GM12878 (cell line): ENCODE measurements at regions of chr7 and their contacts with region 1.

Region 1: DNA sequence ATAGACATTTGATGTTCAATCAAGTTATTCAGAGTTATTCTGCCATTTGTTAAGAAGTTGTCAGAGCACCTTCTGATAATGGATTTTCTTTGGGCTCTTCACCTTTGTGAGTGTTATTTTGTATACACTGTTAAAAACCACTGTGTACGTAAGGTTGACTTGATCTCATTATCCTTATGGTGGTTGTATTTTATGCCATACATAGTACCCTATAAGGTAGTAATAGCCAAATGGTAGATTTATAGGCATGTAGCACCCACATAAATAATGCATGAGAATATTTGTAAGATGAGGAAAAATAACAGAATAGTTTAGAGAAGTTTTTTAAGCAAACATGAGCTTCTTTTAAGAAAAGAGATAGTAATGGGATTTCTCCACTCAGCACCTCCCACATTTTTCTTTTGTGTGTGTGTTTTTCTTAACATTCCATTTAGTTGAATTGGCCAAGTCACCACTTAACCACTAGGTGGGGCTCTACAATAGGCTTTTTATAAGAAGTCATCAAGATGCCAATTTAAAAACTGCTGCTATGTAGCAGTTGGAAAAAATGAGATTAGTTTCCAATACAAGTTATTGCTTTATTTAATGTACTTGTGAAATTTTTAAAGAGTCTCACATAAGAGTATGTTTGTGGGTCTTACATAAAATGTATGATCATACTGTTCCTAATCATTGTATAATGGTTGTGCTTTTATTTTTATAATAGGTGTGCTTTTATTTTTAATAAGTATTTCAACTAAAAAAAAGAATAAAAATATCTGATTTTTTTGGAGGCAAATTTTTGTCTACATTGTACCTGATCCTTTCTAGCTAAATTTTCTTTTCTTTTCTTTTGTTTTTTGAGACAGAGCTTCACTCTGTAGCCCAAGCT is 41.1 kb upstream of the STMP1 start:
- DNase-seq: no peak
- ATAC-seq: peak; percentile 63
- H3K4me3 ChIP-seq: no peak overlapping the region
- H3K27ac ChIP-seq: no peak overlapping the region
- H3K4me1 ChIP-seq: no peaks in the 10 kb centered on the region
- H3K27me3 ChIP-seq: no peaks in the 10 kb centered on the region
- CTCF ChIP-seq: peak; percentile 58 to 78 (median 67)
- EP300 ChIP-seq: no peak
- POLR2A ChIP-seq: no peak
- RAD21 ChIP-seq: peak; percentile 43

Region 2: DNA sequence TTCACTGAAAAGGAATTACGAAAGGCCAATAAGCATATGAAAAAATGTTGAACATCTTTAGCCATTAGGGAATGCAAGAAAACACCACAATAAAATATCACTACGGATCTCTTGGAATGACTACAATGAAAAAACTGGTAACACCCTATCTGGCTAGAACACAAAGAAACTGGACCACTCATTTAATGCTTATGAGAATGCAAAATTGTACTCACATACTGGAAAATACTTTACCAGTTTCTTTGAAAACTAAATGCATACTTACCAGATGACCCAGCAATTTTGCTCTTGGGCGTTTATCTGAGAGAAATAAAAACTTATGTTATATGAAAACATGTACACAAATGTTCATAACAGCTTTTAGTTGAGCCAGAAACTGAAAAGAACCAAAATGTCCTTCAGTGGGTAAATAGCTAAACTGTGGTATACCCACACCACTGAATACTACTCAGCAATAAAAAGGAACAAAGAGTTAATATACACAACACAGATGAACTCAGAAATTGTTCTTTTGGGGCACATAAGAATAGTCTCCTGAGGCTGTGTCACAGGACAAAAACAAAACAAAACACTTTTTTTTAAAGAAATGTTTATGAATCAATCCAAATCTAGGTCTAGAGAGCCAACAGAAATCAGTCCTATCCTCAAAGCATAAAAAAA is 134.8 kb before region 1 on chr7:
- CTCF ChIA-PET with region 1: no interaction called
- POLR2A ChIA-PET with region 1: no interaction called
- RAD21 ChIA-PET with region 1: no interaction called
- SMC1A ChIA-PET with region 1: no interaction called
- in situ Hi-C with region 1: no loop called
- intact Hi-C with region 1: no loop called
- DNase-seq: no peak
- ATAC-seq: peak; percentile 36; the same call in 1 of the 3 replicates
- H3K4me3 ChIP-seq: no peak overlapping the region
- H3K27ac ChIP-seq: no peak overlapping the region
- H3K4me1 ChIP-seq: no peaks in the 10 kb centered on the region
- H3K27me3 ChIP-seq: no peaks in the 10 kb centered on the region
- CTCF ChIP-seq: no peak
- EP300 ChIP-seq: no peak
- POLR2A ChIP-seq: no peak
- RAD21 ChIP-seq: no peak

Region 3: DNA sequence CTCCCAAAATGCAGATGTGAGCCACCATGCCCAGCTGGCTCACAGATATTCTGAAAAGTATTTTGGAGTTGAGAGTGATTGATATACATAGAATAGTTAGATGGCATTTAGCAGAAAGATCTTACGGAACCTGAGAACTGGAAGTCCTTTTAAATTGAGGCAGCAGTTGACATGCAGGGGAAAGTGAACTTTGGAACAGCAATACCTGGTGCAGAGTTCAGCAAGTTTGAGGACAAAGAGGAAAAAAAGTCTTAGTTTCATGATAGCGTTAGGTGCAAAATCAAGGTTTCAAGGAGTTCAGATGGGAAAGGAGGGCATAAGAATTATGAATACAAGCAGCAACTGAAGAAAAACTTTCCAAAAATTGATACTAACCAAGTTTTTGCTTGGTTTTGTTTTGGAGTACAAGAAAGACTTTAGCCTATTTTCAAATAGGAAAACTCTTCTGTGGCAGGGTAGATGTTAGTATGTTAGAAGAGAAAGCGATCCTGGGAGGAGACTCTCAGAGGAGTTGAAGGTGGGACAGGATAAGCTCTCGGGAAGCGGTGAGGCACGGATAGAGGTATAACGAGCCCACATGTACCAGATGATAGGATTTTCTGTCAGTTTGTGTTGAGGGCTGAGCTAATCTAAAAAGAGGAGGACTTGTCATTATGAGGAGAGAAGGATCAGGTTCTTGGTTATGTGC is 13.1 kb after region 1 on chr7:
- CTCF ChIA-PET with region 1: interaction called, 12 read pairs
- POLR2A ChIA-PET with region 1: no interaction called
- RAD21 ChIA-PET with region 1: no interaction called
- SMC1A ChIA-PET with region 1: no interaction called
- in situ Hi-C with region 1: no loop called
- intact Hi-C with region 1: no loop called
- DNase-seq: no peak
- ATAC-seq: no peak
- H3K4me3 ChIP-seq: no peak overlapping the region
- H3K27ac ChIP-seq: no peak overlapping the region
- H3K4me1 ChIP-seq: no peaks in the 10 kb centered on the region
- H3K27me3 ChIP-seq: no peaks in the 10 kb centered on the region
- CTCF ChIP-seq: no peak
- EP300 ChIP-seq: no peak
- POLR2A ChIP-seq: no peak
- RAD21 ChIP-seq: no peak